Panc1 (cell line): ENCODE measurements at regions of chr12 and their contacts with region 1.

Region 1: GRCh38 chr12:120292661-120293531 is at the start of gene RNU4-1:
- DNase-seq: peak; percentile 86
- ATAC-seq: peak; percentile 69
- H3K4me3 ChIP-seq: peak within 1 kb of the TSS; percentile 43 to 87
- H3K27ac ChIP-seq: peak within 1 kb of the TSS; percentile 98
- H3K4me1 ChIP-seq: peaks cover 15% of the 10 kb centered on the region
- H3K27me3 ChIP-seq: no peaks in the 10 kb centered on the region
- CTCF ChIP-seq: no peak
- total RNA-seq, gene RNU4-1: 1,565 TPM

Region 2: DNA sequence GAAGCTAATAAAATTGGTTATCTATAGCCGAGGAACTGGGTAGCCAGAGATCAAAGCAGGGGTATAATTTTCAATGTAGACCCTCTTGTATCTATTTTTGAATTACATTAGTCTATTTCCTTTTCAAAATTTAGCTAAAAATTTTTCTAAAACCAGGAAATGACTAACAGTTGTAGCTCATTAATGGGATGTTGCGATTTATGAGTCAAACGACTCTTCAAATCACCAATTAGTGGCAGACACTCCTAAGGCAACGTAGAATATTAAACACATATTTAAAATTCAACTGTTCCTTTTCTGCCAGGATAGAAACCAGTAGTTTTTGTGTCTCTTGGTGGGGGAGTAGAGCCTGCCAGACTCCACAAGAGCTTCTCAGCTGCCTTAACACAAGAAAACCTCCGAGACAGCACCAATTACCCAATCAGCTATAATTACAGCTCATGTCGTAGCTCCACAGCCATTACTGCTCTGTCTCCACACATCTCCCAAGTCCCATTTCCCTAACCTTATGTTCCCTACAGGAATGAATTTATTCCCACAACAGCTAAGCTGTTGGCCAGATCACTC is 125.3 kb before region 1 on chr12:
- CTCF ChIA-PET with region 1: no interaction called
- POLR2A ChIA-PET with region 1: interaction called, 19 read pairs
- in situ Hi-C with region 1: no loop called
- intact Hi-C with region 1: no loop called
- DNase-seq: no peak
- ATAC-seq: no peak
- H3K4me3 ChIP-seq: no peak overlapping the region
- H3K27ac ChIP-seq: no peak overlapping the region
- H3K4me1 ChIP-seq: no peaks in the 10 kb centered on the region
- H3K27me3 ChIP-seq: no peaks in the 10 kb centered on the region
- CTCF ChIP-seq: no peak

Region 3: DNA sequence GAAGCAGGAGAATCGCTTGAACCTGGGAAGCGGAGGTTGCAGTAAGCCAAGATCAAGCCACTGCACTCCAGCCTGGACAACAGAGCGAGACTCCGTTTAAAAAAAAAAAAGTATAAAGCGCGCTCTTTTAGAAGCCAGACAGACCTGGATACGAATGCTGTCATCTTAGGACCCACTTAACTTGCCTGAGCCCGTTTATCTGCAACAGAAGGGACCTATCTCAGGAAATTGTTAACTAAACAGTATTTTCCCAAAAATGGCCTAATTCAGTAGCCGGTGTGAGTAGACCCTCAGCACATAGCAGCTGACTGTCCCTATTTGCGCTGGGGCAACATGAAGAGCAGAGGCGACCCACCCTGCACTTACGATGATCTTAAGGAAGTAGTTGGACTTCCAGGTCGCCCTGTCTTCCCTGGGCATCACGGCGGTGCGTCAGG is 92.5 kb before region 1 on chr12:
- CTCF ChIA-PET with region 1: interaction called, 12 read pairs
- POLR2A ChIA-PET with region 1: interaction called, 25 read pairs
- in situ Hi-C with region 1: no loop called
- intact Hi-C with region 1: no loop called
- DNase-seq: no peak
- ATAC-seq: no peak
- H3K4me3 ChIP-seq: peak overlapping the region; percentile 76 to 88
- H3K27ac ChIP-seq: peak overlapping the region; percentile 98
- H3K4me1 ChIP-seq: peaks cover 27% of the 10 kb centered on the region
- H3K27me3 ChIP-seq: no peaks in the 10 kb centered on the region
- CTCF ChIP-seq: no peak

Region 4: DNA sequence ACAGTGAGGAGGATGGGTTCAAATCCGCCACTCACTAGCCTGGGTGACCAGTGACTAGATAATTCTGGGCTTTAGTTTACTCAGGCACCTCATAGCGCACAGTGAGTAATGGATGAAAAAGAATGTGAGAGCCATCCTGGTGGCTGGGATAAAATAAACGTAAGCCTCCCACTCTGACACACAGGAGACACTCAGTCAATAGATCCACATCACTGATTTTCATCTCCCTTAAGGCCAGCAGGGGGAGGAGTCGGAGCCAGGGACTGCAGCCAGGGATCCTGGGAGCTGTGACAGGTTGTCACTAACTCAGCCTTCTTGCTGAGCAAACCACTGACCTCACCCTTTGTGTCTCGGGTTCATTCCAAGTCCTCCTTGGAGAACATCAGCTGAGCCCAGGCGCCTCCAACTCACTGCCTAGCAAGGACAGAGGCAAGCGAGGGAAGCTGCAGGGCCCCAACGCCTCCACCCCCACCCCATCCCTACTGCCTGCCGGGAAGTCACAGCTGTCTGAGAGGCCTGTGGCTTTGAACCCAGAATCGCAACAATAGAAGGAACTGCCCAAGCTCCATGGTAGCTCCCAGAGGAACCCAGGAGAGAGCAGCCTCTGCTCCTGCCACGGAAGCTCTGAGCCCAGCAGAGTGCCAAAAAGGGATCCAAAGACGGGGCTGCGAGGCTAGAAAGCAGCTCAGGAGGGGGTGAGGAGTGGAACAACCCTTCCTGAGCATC is 58.1 kb before region 1 on chr12:
- CTCF ChIA-PET with region 1: interaction called, 4 read pairs
- POLR2A ChIA-PET with region 1: interaction called, 28 read pairs
- in situ Hi-C with region 1: no loop called
- intact Hi-C with region 1: no loop called
- DNase-seq: peak; percentile 90
- ATAC-seq: peak; percentile 40
- H3K4me3 ChIP-seq: no peak overlapping the region
- H3K27ac ChIP-seq: peak overlapping the region; percentile 100
- H3K4me1 ChIP-seq: peaks cover 95% of the 10 kb centered on the region
- H3K27me3 ChIP-seq: no peaks in the 10 kb centered on the region
- CTCF ChIP-seq: peak; percentile 25

Region 5: GRCh38 chr12:120257041-120257821 is 35.7 kb before region 1 on chr12:
- CTCF ChIA-PET with region 1: interaction called, 18 read pairs
- POLR2A ChIA-PET with region 1: interaction called, 8 read pairs
- in situ Hi-C with region 1: no loop called
- intact Hi-C with region 1: no loop called
- DNase-seq: no peak
- ATAC-seq: peak; percentile 48
- H3K4me3 ChIP-seq: peak overlapping the region in 1 of 2 experiments; percentile 3; a peak in 2 of 4 replicates
- H3K27ac ChIP-seq: peak overlapping the region; percentile 100
- H3K4me1 ChIP-seq: peaks cover 96% of the 10 kb centered on the region
- H3K27me3 ChIP-seq: no peaks in the 10 kb centered on the region
- CTCF ChIP-seq: no peak

Region 6: GRCh38 chr12:121296618-121297434 is 1003.9 kb after region 1 on chr12 and contains the start of gene CAMKK2:
- CTCF ChIA-PET with region 1: no interaction called
- POLR2A ChIA-PET with region 1: interaction called, 11 read pairs
- in situ Hi-C with region 1: no loop called
- intact Hi-C with region 1: no loop called
- DNase-seq: no peak
- ATAC-seq: peak; percentile 93
- H3K4me3 ChIP-seq: peak within 1 kb of the TSS; percentile 77 to 92
- H3K27ac ChIP-seq: peak within 1 kb of the TSS; percentile 85
- H3K4me1 ChIP-seq: peaks cover 9% of the 10 kb centered on the region
- H3K27me3 ChIP-seq: no peaks in the 10 kb centered on the region
- CTCF ChIP-seq: no peak; the same call in 1 of the 2 replicates
- total RNA-seq, gene CAMKK2: 37.8 TPM